MCF 10A (cell line): ENCODE measurements at regions of chr20 and their contacts with region 1.

Region 1: DNA sequence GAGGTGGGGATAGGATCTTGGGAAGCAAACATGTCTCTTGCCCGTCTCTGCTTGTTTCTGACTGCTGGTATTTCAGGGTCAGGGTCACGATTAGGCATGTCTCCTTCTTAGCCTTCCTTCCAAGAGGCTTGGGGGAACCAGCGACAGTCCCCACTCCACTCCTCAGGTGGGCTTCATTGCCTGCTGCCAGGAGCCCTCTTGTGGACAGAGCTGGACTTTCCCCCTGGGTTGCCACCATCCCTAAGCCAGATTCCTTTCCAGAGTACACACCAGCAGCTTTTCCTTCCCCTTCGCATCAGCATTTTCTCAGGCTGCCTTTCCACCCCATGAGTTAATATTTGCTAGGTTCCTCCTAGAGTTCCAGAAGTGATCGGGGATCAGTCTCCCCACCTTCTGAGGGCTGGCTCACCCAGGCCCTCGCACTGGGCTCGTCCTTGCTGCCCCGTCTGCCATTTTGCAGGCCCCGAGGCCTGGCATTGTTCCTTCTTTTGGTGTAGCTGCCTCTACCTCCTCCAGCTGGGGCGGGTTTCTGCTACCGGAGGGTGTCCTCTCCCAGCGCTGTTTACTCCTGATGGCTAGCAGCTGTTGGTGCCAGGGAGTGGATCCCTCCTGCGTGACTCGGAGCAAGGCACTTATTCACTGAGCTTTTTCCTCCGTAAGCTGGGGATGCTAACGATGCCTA is 8.8 kb upstream of the C20orf144 start:
- DNase-seq: peak; percentile 57
- H3K4me3 Mint-ChIP-seq: no peak overlapping the region
- H3K27ac Mint-ChIP-seq: no peak overlapping the region
- H3K4me1 Mint-ChIP-seq: peaks cover under 1% of the 10 kb centered on the region
- H3K27me3 Mint-ChIP-seq: no peaks in the 10 kb centered on the region
- CTCF ChIP-seq: peak; percentile 76

Region 2: DNA sequence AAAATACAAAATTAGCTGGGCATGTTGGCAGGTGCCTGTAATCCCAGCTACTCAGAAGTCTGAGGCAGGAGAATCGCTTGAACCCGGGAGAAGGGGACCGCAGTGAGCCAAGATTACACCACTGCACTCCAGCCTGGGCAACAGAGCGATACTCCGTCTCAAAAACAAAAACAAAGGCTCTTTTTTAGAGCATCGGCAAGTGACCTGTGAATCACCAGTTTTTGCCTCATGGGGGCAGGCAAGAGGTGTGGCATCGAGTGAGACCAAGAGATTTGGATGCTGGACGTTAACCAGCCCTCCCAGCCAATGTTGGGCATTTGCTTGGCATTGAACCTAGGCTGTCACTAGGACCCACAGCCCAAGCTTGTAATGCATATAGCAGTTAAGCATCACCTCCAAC is 237.4 kb before region 1 on chr20:
- CTCF ChIA-PET with region 1: no interaction called
- POLR2A ChIA-PET with region 1: no interaction called
- intact Hi-C with region 1: loop called (anchors 1 kb)
- DNase-seq: peak; percentile 77
- H3K4me3 Mint-ChIP-seq: no peak overlapping the region
- H3K27ac Mint-ChIP-seq: no peak overlapping the region
- H3K4me1 Mint-ChIP-seq: no peaks in the 10 kb centered on the region
- H3K27me3 Mint-ChIP-seq: no peaks in the 10 kb centered on the region
- CTCF ChIP-seq: peak; percentile 42

Region 3: DNA sequence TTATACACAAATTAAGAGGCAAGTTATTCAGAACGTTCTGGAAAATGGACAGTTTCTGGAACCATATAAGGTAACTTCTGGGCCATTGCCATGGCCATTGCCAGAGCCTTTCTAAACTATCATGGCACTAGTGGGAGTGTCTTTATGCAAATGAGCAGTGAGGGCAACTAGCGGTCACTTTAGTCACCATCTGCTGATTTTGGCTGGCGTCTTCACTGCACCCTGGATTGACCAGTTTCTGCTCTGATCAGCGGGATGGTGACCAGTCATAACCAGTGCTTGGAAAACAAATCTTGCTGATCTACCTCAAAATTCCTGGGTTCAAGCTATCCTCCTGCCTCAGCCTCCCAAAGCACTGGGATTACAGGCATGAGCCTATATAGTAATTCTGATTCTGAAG is 202.5 kb before region 1 on chr20:
- CTCF ChIA-PET with region 1: interaction called, 15 read pairs
- POLR2A ChIA-PET with region 1: interaction called, 3 read pairs
- intact Hi-C with region 1: no loop called
- DNase-seq: peak; percentile 60
- H3K4me3 Mint-ChIP-seq: no peak overlapping the region
- H3K27ac Mint-ChIP-seq: no peak overlapping the region
- H3K4me1 Mint-ChIP-seq: peaks cover 6% of the 10 kb centered on the region
- H3K27me3 Mint-ChIP-seq: no peaks in the 10 kb centered on the region
- CTCF ChIP-seq: no peak

Region 4: DNA sequence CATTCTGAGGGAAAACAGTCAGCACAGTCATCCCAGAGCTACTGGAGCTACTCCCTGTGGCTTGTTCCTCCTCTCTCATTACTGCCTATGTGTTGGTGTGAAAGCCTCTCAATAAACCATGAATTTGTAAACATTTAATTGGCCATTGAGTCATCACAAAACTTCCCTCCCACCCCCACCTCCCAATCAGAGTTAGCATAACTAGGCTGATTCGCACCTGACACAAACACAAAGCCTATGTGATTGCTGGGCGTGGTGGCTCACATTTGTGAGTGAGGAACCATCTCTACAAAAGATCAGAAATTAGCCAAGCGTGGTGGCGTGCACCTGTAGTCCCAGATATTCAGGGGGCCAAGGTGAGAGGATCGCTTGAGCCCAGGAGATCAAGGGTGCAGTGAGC is 192.6 kb before region 1 on chr20:
- CTCF ChIA-PET with region 1: interaction called, 15 read pairs
- POLR2A ChIA-PET with region 1: interaction called, 4 read pairs
- intact Hi-C with region 1: loop called (anchors 1 kb)
- DNase-seq: no peak
- H3K4me3 Mint-ChIP-seq: no peak overlapping the region
- H3K27ac Mint-ChIP-seq: no peak overlapping the region
- H3K4me1 Mint-ChIP-seq: no peaks in the 10 kb centered on the region
- H3K27me3 Mint-ChIP-seq: no peaks in the 10 kb centered on the region
- CTCF ChIP-seq: no peak

Region 5: DNA sequence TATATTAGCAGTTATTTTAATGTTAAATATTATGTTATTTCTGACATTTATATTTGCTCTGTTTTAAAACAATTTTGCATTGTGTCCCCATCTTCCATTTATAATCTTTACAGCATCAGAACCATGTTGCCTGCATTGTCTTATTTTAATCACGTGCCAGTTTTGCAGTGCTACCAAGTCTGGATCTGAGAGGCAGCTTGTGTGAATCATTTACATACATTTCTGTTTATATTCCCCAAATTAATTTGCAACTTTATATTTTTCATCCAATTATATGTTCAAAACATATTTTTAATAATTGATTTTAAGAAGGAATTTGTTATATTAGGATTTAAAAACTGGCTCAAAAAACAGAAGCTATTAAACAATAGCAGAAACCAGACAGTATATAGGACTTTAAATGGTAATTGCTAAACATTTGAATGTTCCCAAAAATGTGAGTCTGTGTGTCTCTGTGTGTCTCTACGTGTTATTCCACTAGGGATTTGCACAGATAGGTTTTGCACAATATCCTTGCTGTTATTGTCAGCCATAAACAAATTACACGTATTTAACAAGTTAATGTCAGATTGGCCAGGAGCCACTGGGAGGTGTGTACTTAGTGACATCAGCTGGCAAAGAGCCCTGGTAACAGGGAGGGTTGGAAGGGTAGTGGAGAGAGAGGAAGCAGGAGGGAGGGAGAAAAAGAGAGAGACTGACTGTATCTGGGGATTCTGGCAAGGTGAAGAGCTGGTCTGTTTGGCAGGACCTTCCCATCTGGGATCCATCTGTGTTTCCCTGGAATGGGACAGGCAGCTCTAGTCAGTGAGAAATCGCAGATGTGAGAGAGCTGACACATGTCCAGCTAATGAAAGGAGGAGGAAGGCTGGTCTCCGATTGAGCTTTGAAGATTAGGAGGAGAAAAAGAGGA is 91.4 kb before region 1 on chr20:
- CTCF ChIA-PET with region 1: no interaction called
- POLR2A ChIA-PET with region 1: no interaction called
- intact Hi-C with region 1: no loop called
- DNase-seq: peak; percentile 95
- H3K4me3 Mint-ChIP-seq: peak overlapping the region; percentile 66
- H3K27ac Mint-ChIP-seq: peak overlapping the region; percentile 65
- H3K4me1 Mint-ChIP-seq: peaks cover 8% of the 10 kb centered on the region
- H3K27me3 Mint-ChIP-seq: no peaks in the 10 kb centered on the region
- CTCF ChIP-seq: no peak

Region 6: DNA sequence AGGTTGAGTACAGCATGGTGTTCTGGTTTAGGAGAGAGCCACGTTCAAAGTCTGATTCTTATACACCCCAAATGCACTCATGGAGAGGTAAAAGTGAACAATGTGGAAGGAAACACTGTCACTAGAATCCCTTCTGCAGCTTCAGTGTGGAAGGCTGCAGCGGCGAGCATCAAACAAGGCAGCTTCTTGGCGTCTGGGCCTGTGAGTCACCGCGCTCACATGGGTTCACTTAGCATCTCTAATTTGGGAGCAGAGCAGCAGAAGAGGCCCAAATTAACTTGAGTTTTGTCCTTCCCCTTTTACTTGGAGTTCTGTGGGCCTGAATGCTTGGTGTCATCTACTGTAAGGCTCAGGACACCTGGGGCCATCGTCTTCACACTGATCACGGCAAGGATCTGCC is 43.8 kb after region 1 on chr20:
- CTCF ChIA-PET with region 1: no interaction called
- POLR2A ChIA-PET with region 1: no interaction called
- intact Hi-C with region 1: no loop called
- DNase-seq: no peak
- H3K4me3 Mint-ChIP-seq: no peak overlapping the region
- H3K27ac Mint-ChIP-seq: no peak overlapping the region
- H3K4me1 Mint-ChIP-seq: no peaks in the 10 kb centered on the region
- H3K27me3 Mint-ChIP-seq: no peaks in the 10 kb centered on the region
- CTCF ChIP-seq: no peak

Region 7: GRCh38 chr20:33713865-33714367 is 60.6 kb after region 1 on chr20:
- CTCF ChIA-PET with region 1: no interaction called
- POLR2A ChIA-PET with region 1: no interaction called
- intact Hi-C with region 1: no loop called
- DNase-seq: no peak
- H3K4me3 Mint-ChIP-seq: no peak overlapping the region
- H3K27ac Mint-ChIP-seq: no peak overlapping the region
- H3K4me1 Mint-ChIP-seq: peaks cover 20% of the 10 kb centered on the region
- H3K27me3 Mint-ChIP-seq: no peaks in the 10 kb centered on the region
- CTCF ChIP-seq: no peak